Head of caudate nucleus (tissue), 42 donors: ENCODE measurements at regions of chr14 and their contacts with region 1.

Region 1: DNA sequence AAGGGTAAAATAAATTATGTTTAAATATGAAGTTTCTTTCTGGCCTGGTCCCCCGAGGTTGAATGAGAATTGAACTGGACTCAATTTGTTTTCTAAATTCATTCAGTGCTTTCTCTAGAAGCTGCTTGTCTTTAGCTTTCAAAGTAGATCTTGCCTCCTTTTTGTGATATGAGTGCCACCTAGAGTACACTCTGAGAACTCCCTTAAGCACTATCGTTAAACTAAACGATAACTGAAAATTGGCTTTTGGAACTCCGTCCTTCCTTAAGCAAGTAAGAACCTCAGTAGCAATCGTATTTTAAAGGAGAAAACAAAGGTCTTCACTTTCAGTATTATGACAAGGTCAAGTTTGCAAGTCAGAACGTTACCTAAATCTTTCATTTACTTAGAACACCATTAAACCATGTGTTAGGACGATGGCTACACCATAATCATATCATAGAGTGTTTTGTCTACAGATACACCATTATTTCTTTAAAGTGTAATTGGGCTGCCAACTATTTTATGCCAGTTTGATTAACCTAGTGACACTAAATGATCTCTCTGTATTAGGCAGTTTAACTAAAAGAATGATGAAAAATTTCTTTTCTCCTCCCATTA is 364.8 kb downstream of the SNAPC1 start:
- DNase-seq: peak in 10 of 42 donors; percentile 20 to 76 (median 36)

Region 2: DNA sequence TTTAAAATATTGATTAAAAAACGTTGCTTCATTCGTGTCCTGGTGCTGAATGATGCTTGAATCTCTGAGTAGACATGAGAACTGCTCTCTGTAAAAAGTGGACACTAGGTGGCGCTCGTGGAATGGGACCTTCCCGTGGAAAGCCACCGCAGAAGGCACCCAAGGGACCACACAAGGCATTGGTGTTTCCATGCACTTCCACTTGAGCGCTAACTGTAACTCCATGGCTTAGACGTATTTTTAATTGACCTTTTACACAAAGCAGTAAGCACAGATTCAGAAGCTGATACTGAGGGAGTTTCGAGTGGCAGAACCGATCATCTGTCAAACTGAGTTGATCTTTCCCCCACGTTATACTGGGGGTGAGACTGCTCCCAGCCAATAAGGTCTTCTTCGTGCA is 670.3 kb before region 1 on chr14:
- intact Hi-C with region 1: loop called (anchors 10 kb)
- DNase-seq: peak; percentile 58 to 96 (median 86)

Region 3: DNA sequence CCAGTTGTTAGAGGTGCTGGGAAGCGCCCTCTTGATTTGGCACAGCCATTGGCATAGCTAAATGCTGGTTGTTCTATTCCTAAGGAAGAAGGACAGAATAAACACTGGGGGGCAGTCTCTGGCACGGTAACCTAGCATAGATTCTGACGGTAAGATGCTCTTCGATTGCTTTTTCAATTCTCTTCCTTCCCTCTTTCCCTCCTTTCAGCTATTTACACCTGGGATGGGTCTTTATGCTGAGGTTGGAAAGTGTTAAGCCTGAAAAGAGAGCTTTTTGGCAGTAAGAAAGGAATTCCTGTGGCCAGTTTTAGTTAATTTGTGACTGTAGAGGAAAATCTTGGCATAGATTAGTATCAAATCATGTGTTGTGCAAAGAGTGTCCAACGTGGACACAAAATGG is 201.9 kb before region 1 on chr14:
- intact Hi-C with region 1: loop called (anchors 2 kb)
- DNase-seq: peak in 30 of 42 donors; percentile 3 to 75 (median 30)

Region 4: DNA sequence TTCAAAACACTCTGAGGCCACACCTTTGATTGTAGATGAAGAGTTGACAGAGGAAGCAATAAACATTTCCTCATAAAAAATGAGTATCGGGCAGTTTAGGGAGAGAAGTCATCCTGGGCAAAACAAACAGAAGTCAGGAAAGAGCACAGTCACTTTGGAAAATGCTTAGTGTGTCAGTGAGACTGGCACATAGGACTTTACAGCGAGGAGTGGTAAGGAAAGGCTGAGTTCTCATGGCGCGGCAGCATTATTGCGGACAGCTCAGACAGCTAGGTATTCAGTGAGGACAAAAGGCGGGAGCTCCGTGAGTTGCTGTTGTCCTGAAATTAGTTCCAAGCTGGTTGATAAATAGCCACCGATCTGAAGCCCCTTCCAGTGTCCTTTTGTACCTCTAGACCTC is 134.8 kb before region 1 on chr14:
- intact Hi-C with region 1: no loop called
- DNase-seq: no peak

Region 5: DNA sequence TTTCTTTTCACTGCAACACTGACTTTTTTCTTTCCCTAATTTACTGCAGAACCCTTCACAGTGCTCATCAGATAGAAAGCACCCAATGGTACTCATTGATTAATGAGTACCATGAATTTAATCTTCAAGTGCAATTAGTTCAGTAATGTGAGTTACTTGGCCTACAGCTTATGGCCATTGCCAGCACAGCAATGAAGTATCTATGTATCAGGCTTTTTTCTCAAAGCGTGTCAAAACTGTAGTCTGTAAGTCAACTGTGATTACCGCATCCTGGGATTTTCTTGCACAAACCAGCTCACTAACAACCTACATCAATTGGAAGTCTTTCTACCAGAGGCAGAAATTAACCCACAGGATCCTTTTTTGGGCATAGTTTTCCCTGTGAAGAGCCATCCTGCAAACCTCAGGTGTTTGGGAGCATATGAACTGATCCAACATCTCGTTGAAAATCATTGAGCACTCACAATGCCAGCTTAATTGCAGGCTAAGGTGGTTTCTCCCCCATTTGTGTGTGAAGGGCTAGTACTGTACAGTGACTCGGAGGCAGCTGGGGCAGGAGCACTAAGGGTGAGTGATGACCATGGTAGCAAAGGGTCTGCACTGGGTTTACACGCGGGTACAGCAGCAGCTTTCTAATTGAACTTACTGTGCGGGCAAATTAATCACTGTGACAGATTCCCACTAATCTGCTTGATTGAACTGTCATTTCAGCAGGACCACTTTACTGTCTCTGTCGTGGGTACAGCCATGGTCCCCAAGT is 254.5 kb after region 1 on chr14:
- intact Hi-C with region 1: no loop called
- DNase-seq: no peak